ENCODE measurements at regions of chr19 and their contacts with region 1.

Region 1: GRCh38 chr19:32680666-32681385 is 5.2 kb downstream of the RGS9BP start:
- DNase-seq: no peak
- ATAC-seq: no peak
- H3K4me3 ChIP-seq: no peak overlapping the region
- H3K4me3 Mint-ChIP-seq: no peak overlapping the region
- H3K27ac ChIP-seq: no peak overlapping the region
- H3K27ac Mint-ChIP-seq: no peak overlapping the region
- H3K4me1 ChIP-seq: peaks cover 7% of the 10 kb centered on the region
- H3K4me1 Mint-ChIP-seq: peaks cover 7% of the 10 kb centered on the region
- H3K27me3 ChIP-seq: peaks cover 0 to 6% of the 10 kb centered on the region in 2 experiments
- H3K27me3 Mint-ChIP-seq: peaks cover 14% of the 10 kb centered on the region
- CTCF ChIP-seq: no peak

Region 2: DNA sequence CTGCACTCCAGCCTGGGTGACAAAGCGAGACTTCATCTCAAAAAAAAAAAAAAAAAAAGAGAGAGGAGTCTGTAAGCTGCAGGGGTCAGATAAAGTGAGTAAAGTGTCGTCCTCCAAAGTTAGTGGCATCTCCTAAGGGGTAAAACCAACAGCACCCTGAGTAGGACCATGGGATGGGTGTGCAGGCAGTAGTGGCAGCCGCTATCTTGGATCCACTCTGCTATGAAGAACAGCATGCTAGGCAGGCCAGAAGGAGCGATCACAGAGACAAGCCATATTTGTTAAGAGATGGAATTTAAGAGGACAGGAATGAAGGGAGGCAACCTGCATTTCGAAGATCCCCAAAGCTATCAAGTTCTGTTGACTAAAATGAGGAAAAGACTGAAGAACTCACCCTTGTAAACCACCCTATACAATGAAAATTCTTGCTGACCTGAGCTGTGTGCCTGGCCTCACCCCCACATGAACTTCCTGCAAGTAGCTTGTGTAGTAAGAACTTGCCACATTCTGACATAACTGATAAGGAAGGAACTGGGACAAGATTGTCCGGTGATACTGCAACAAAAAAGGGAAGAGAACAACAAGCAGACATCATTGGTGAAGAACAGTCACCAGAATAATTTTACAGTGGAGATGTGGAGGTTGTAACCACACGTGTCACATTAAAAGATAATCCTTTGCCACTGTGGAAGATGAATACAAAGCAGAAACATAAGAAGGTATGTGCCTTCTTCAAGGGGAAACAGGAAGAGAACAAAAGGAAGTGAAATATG is 259.1 kb before region 1 on chr19:
- CTCF ChIA-PET with region 1: no interaction called
- POLR2A ChIA-PET with region 1: no interaction called
- intact Hi-C with region 1: no loop called
- DNase-seq: peak in 1 of 9 experiments; percentile 9
- ATAC-seq: no peak
- H3K4me3 ChIP-seq: no peak overlapping the region
- H3K4me3 Mint-ChIP-seq: peak overlapping the region; percentile 6
- H3K27ac ChIP-seq: peak overlapping the region; percentile 2 to 7
- H3K27ac Mint-ChIP-seq: peak overlapping the region; percentile 78
- H3K4me1 ChIP-seq: peaks cover 16% of the 10 kb centered on the region
- H3K4me1 Mint-ChIP-seq: peaks cover 14% of the 10 kb centered on the region
- H3K27me3 ChIP-seq: no peaks in the 10 kb centered on the region
- H3K27me3 Mint-ChIP-seq: no peaks in the 10 kb centered on the region
- CTCF ChIP-seq: no peak

Region 3: DNA sequence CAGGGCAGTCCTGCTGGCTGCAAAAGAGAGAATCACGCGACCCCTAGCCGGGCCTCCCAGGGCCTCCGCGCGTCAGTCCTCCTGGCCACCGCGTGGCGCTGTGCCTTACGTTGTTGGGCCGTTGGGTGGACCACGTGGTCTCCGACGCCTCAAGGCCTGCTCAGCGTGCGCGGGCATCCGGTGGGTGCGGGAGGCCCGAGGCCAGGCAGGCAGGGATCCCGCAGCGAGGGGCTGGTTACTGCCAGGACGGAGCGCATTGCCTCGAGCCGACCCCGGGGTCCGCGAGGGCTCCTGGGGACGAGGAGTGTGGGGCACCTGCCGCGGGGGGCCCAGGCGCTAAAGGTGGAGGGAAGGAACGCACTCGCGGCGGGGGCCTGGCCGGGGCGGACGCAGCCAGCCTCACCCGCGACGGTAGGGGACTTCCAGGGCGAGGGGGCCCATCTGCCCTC is 38.8 kb after region 1 on chr19 and contains the start of gene TDRD12:
- CTCF ChIA-PET with region 1: no interaction called
- POLR2A ChIA-PET with region 1: no interaction called
- intact Hi-C with region 1: loop called in 1 of 2 experiments (anchors 1 kb)
- DNase-seq: peak in 1 of 9 experiments; percentile 27
- ATAC-seq: no peak
- H3K4me3 ChIP-seq: no peak within 1 kb of the TSS
- H3K4me3 Mint-ChIP-seq: no peak within 1 kb of the TSS
- H3K27ac ChIP-seq: no peak within 1 kb of the TSS
- H3K27ac Mint-ChIP-seq: no peak within 1 kb of the TSS
- H3K4me1 ChIP-seq: no peaks in the 10 kb centered on the region
- H3K4me1 Mint-ChIP-seq: no peaks in the 10 kb centered on the region
- H3K27me3 ChIP-seq: no peaks in the 10 kb centered on the region
- H3K27me3 Mint-ChIP-seq: no peaks in the 10 kb centered on the region
- CTCF ChIP-seq: no peak
- total RNA-seq, gene TDRD12: 0.14 to 0.22 TPM